ENCODE measurements at regions of chr10 and their contacts with region 1.

Region 1: GRCh38 chr10:62804356-62805230 is at the start of gene ADO:
- DNase-seq: peak; percentile 85
- H3K4me3 ChIP-seq: peak within 1 kb of the TSS; percentile 45 to 73 (median 70)
- H3K27ac ChIP-seq: peak within 1 kb of the TSS; percentile 87
- H3K4me1 ChIP-seq: peaks cover 18% of the 10 kb centered on the region
- H3K27me3 ChIP-seq: peaks cover 10 to 12% of the 10 kb centered on the region in 2 experiments
- CTCF ChIP-seq: no peak
- POLR2A ChIP-seq: peak; percentile 51
- total RNA-seq, gene ADO: 14.1 and 14.5 TPM in 2 replicates

Region 2: DNA sequence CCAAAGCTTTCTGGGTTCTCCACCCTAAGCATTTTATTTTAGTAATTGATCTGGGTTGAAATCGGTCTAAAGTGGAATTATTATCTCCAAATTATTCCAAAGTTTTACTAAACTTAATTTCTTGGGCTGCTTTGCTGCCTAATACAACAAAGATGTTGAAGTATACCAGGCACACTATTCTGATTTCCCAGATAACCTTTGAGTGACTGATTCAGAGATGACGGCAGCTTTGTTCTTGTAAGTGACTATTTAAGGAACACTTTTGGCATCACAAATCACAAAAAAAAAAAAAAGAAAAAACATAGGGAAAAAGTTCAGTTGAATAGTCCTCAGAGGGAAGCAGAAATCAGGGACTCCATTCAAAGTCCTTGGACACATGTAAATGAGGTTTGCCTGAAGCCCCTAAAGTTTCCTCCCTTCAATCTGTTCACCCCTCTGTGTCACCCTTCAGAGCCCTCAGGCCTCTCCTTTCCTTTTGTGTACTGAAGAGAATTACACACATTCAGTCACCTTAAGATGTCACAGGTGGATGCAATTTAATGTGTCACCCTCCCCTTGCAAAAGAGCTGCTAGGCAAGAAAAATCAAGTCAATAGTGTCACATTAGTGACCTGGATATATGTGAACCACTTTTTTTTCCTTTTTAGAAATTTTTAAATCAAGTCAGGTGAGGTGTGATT is 617.5 kb before region 1 on chr10:
- CTCF ChIA-PET with region 1: no interaction called
- POLR2A ChIA-PET with region 1: no interaction called
- dilution Hi-C with region 1: no loop called
- intact Hi-C with region 1: no loop called
- DNase-seq: no peak
- H3K4me3 ChIP-seq: no peak overlapping the region
- H3K27ac ChIP-seq: no peak overlapping the region
- H3K4me1 ChIP-seq: no peaks in the 10 kb centered on the region
- H3K27me3 ChIP-seq: no peaks in the 10 kb centered on the region
- CTCF ChIP-seq: no peak
- POLR2A ChIP-seq: no peak

Region 3: DNA sequence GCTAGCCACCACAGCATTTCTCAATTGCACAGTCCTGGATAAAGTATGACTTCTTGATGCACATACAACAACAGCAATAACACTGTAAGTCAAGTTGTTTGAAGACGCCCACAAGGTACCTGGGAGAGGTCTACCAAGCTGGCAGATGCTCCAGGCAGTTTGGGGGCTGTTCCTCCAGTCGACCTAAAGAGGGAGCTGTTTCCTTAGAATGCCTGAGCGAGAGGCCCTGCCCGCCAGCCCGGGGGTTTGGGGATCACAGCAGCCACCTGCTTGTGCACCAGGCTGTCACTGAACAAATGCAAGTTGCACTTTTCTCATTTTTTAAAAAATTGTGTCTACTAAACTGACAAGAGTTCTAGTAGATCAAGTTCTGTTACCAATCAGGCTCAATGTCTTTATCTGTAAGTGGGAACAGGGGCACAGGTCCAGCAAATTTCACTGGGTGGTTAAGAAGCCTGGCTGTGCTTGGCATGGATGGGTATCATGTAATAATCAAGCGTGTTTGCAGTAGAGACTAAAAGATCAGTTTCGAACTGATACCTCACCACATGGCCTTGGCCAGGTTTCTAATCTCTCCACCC is 193.9 kb before region 1 on chr10:
- CTCF ChIA-PET with region 1: interaction called, 10 read pairs
- POLR2A ChIA-PET with region 1: no interaction called
- dilution Hi-C with region 1: no loop called
- intact Hi-C with region 1: no loop called
- DNase-seq: peak; percentile 41
- H3K4me3 ChIP-seq: no peak overlapping the region
- H3K27ac ChIP-seq: no peak overlapping the region
- H3K4me1 ChIP-seq: no peaks in the 10 kb centered on the region
- H3K27me3 ChIP-seq: peaks cover 2 to 5% of the 10 kb centered on the region in 2 experiments
- CTCF ChIP-seq: peak; percentile 56 to 82
- POLR2A ChIP-seq: no peak

Region 4: DNA sequence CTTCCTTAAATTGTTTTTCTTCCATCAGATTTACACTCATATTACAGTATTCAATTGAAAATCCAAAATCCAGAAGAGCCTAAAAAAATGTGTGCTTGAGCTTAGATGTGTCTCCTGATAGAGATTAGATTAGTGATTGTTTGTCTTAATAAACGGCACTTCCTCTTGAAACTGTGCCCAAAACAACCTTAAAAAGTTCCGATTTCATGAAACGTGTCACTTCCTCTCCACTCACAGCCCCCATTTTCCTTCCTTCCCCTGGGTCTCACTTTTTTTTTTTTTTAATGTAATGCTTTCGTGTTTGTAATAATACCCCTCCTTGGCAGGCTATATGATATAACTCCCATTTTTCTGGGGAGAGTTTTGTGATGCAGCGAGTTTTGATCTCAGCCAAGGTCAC is 114.9 kb before region 1 on chr10:
- CTCF ChIA-PET with region 1: no interaction called
- POLR2A ChIA-PET with region 1: no interaction called
- dilution Hi-C with region 1: no loop called
- intact Hi-C with region 1: loop called (anchors 1 kb)
- DNase-seq: peak; percentile 73
- H3K4me3 ChIP-seq: no peak overlapping the region
- H3K27ac ChIP-seq: peak overlapping the region; percentile 39
- H3K4me1 ChIP-seq: peaks cover 22% of the 10 kb centered on the region
- H3K27me3 ChIP-seq: no peaks in the 10 kb centered on the region
- CTCF ChIP-seq: no peak
- POLR2A ChIP-seq: no peak

Region 5: GRCh38 chr10:62760401-62760800 is 44.2 kb before region 1 on chr10:
- CTCF ChIA-PET with region 1: interaction called, 3 read pairs
- POLR2A ChIA-PET with region 1: no interaction called
- dilution Hi-C with region 1: no loop called
- intact Hi-C with region 1: loop called (anchors 1 kb)
- DNase-seq: peak; percentile 83
- H3K4me3 ChIP-seq: no peak overlapping the region
- H3K27ac ChIP-seq: peak overlapping the region; percentile 55
- H3K4me1 ChIP-seq: peaks cover 17% of the 10 kb centered on the region
- H3K27me3 ChIP-seq: peaks cover 0 to 5% of the 10 kb centered on the region in 2 experiments
- CTCF ChIP-seq: no peak
- POLR2A ChIP-seq: no peak